BJ (cell line): ENCODE measurements at regions of chr1 and their contacts with region 1.

Region 1: GRCh38 chr1:75765697-75766355 is 20.2 kb upstream of the RABGGTB start:
- DNase-seq: peak; percentile 49
- H3K4me3 ChIP-seq: no peak overlapping the region
- H3K27me3 ChIP-seq: no peaks in the 10 kb centered on the region
- CTCF ChIP-seq: no peak

Region 2: DNA sequence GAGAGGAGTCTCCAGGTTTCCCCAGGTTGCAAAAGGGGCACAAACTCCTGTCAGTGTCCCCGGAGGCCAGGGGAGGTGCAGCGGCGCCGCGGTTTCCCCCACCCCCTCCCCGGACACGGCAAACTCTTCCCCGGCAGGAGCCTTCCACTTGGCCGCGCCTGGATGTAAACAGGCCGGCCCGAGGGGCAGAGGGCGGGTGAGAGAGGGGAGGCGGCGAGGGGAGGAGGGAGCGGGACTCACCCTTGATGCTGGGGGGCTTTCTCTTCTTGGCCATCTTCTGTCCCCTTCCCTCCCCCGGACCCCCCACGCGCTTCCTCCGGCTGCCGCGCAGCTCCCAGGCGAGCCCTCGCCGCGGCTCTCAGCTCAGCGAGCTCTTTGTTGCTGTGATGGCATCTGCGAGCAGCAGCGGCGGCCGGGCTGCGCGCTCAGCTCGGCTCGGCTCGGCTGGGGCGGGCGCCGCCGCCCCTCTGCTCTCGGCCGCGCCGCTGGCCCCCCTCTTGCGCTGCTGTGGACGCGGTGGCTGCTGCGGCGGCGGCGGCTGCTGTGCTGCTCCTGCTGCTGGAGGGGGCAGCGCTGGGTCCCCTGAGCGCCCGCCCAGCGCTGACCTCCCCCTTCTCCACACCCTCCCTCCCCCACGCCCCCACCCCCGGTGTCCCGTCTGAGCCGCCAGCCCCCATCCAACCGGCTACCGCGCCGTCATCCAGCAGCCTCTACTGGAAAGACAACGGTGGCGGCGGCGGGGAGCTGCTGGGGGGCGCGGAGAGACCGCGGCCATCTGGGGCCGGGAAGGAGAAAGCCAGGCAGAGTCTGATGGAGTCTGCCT is 150.0 kb before region 1 on chr1:
- CTCF ChIA-PET with region 1: no interaction called
- POLR2A ChIA-PET with region 1: no interaction called
- DNase-seq: no peak
- H3K4me3 ChIP-seq: peak overlapping the region; percentile 46
- H3K27me3 ChIP-seq: peaks cover 18% of the 10 kb centered on the region
- CTCF ChIP-seq: no peak

Region 3: DNA sequence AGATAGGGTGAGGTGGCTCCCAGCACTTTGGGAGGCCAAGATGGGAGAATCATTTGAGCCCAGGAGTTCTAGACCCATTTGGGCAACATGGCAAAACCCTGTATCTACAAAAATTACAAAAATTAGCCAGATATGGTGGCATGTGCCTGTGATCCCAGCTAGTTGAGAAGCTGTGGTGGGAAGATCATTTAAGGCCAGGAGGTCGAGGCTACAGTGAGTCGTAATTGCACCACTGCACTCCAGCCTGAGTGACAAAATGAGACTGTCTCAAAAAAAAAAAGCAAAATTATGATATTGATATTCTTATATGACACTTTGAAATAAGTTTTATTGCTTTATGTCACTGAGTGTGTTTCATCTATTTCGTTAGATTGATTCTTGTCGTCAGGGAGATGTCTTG is 33.9 kb before region 1 on chr1:
- CTCF ChIA-PET with region 1: no interaction called
- POLR2A ChIA-PET with region 1: interaction called, 14 read pairs
- DNase-seq: no peak
- H3K4me3 ChIP-seq: no peak overlapping the region
- H3K27me3 ChIP-seq: no peaks in the 10 kb centered on the region
- CTCF ChIP-seq: no peak

Region 4: GRCh38 chr1:75745276-75745675 is 20.6 kb before region 1 on chr1:
- CTCF ChIA-PET with region 1: no interaction called
- POLR2A ChIA-PET with region 1: interaction called, 35 read pairs
- DNase-seq: no peak
- H3K4me3 ChIP-seq: no peak overlapping the region
- H3K27me3 ChIP-seq: no peaks in the 10 kb centered on the region
- CTCF ChIP-seq: no peak